ENCODE measurements at regions of chr10 and their contacts with region 1.

Region 1: GRCh38 chr10:119686439-119687191 is 35.4 kb downstream of the BAG3 start:
- DNase-seq: peak; percentile 36 to 86
- H3K4me3 ChIP-seq: peak overlapping the region; percentile 38 to 69 (median 50)
- H3K27ac ChIP-seq: peak overlapping the region; percentile 62; the same call in 1 of the 2 replicates
- H3K4me1 ChIP-seq: peaks cover 3 to 16% (median 14%) of the 10 kb centered on the region in 4 experiments; a peak in 6 of 7 replicates
- H3K27me3 ChIP-seq: no peaks in the 10 kb centered on the region
- CTCF ChIP-seq: peak; percentile 79 to 95 (median 85)
- EP300 ChIP-seq: no peak
- POLR2A ChIP-seq: no peak
- RAD21 ChIP-seq: peak; percentile 90 to 92

Region 2: GRCh38 chr10:119383174-119383856 is 303.3 kb before region 1 on chr10:
- CTCF ChIA-PET with region 1: no interaction called
- POLR2A ChIA-PET with region 1: no interaction called
- DNase-seq: no peak
- H3K4me3 ChIP-seq: no peak overlapping the region
- H3K27ac ChIP-seq: no peak overlapping the region
- H3K4me1 ChIP-seq: no peaks in the 10 kb centered on the region
- H3K27me3 ChIP-seq: no peaks in the 10 kb centered on the region
- CTCF ChIP-seq: no peak
- EP300 ChIP-seq: no peak
- POLR2A ChIP-seq: no peak
- RAD21 ChIP-seq: no peak

Region 3: DNA sequence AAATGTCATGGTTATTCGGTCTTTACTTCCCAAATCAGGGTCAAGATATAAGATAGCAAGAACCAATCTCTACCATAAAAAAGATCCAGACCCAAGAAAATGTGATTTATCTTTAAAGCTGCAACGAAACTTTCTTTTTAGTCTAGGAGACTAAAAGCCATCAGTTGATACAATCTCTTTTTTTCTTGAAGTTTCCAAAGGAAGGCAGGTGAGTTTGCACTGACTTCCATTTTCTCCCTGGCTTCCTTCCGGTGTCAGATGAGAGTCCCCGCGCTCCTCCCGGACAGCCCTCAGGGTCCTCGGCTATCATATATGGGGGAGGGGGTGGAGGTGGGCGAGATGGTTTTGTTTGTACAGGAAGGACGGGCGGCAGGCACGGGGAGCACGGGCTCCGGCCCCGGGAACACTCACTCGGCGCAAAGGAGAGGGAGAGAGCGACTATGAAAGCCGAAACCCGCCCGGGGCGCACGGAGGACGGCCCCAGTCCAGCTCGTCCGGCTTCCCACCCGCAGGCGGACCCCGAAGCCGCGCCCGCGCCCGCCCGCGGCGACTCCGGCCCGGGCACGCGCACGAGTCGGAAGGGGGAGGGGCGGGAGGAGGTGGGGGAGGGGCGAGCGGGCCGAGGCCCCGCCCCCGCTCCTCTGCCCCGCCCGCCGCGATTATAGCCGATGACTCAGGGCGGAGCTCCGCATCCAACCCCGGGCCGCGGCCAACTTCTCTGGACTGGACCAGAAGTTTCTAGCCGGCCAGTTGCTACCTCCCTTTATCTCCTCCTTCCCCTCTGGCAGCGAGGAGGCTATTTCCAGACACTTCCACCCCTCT is 35.7 kb before region 1 on chr10 and contains the start of gene BAG3:
- CTCF ChIA-PET with region 1: interaction called, 8 read pairs
- POLR2A ChIA-PET with region 1: interaction called, 13 read pairs
- DNase-seq: peak; percentile 50 to 91
- H3K4me3 ChIP-seq: peak within 1 kb of the TSS; percentile 74 to 93 (median 82)
- H3K27ac ChIP-seq: peak within 1 kb of the TSS; percentile 86
- H3K4me1 ChIP-seq: peaks cover 0 to 6% (median 2%) of the 10 kb centered on the region in 4 experiments; a peak in 2 of 7 replicates
- H3K27me3 ChIP-seq: peaks cover 0 to 2% (median 0%) of the 10 kb centered on the region in 4 experiments; a peak in 2 of 7 replicates
- CTCF ChIP-seq: no peak
- EP300 ChIP-seq: no peak; a peak in 1 of 3 replicates
- POLR2A ChIP-seq: peak; percentile 72 to 96
- RAD21 ChIP-seq: no peak
- total RNA-seq, gene BAG3: 13.3 and 14.6 TPM in 2 replicates

Region 4: DNA sequence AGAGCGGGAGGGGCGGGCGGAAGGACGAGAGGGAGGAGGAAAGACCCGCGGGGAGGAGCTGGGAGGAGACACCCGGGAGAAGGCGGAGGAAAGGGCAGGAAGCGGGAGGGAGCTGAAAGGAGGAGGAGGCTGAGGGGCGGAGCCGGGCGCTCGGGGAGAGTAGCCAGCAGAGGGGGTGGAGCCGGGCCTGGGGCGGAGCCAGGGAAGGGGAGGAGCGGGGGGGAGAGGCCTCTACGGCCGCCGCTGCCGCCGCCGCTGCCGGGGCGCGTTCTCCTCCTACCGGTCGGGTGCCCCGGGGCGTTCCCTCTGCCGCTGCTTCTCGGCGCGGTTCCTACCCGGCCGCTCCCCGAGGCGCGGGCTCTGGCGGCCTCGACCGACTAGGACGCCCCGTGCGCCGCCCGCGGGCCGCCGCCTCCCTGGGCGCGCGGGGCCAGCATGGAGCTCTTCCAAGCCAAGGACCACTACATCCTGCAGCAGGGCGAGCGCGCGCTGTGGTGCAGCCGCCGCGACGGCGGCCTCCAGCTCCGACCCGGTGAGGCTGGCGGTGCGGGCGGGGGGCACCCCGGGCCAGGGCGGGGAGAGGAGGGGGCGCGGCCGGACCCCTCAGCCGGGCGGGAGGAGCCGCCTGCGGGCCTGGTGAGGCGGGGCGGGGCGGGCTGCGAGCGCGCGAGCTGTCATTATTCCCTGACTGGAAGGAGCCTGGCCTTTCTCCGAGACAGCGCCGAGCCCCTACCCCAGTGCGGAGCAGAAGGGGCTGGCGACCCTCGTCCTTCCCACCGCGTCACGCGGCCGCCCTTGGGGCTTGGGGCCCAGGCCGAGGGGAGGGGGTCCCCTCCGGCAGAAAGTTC is 39.4 kb after region 1 on chr10 and contains the start of gene INPP5F:
- CTCF ChIA-PET with region 1: interaction called, 9 read pairs
- POLR2A ChIA-PET with region 1: interaction called, 17 read pairs
- DNase-seq: peak; percentile 92 to 99
- H3K4me3 ChIP-seq: peak within 1 kb of the TSS; percentile 67 to 99 (median 82)
- H3K27ac ChIP-seq: peak within 1 kb of the TSS; percentile 60; the same call in 1 of the 2 replicates
- H3K4me1 ChIP-seq: peaks cover 4 to 13% (median 8%) of the 10 kb centered on the region in 4 experiments; a peak in 5 of 7 replicates
- H3K27me3 ChIP-seq: no peaks in the 10 kb centered on the region
- CTCF ChIP-seq: no peak
- EP300 ChIP-seq: no peak; a peak in 1 of 3 replicates
- POLR2A ChIP-seq: peak in 1 of 2 experiments; percentile 61; a peak in 2 of 3 replicates
- RAD21 ChIP-seq: 0 out of 4 replicates have a peak, but pooled peaks of 1 of the 2 experiments have one; percentile 1
- total RNA-seq, gene INPP5F: 97.9 and 101 TPM in 2 replicates

Region 5: DNA sequence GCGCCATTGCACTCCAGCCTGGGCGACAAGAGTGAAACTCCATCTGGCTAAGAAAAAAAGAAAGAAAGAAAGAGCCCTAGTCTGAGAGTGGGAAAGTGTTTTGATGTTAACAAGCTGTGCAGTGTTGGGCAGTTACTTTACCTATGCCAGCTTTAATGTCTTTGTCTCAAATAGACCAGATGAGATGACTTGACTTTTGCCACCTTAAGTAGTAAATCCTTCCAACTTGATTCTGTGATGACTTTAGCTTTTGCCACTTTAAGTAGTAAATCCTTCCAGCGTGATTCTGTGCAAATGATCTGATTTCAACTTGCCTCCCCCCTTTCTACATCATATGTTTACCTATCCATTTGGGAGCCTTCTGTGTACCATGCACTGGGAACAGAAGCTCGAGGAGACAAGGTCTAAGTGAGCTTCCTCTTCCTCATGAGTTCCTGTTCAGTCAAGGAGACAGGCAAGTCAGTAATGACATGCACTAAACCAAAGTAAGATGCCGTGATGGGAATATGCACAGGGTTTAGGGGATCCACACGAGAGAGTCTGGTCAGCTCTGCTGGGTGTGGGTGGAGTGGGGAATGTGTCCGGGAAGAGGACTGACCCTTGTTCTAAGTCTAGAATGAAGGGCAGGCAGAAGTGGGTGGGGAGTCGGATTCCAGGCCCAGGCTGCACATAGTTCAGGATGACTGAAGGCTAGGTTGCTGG is 56.5 kb after region 1 on chr10:
- CTCF ChIA-PET with region 1: interaction called, 40 read pairs
- POLR2A ChIA-PET with region 1: interaction called, 4 read pairs
- DNase-seq: peak in 1 of 2 experiments; percentile 40
- H3K4me3 ChIP-seq: no peak overlapping the region
- H3K27ac ChIP-seq: no peak overlapping the region
- H3K4me1 ChIP-seq: peaks cover 0 to 7% (median 0%) of the 10 kb centered on the region in 4 experiments; a peak in 2 of 7 replicates
- H3K27me3 ChIP-seq: no peaks in the 10 kb centered on the region
- CTCF ChIP-seq: no peak
- EP300 ChIP-seq: no peak
- POLR2A ChIP-seq: no peak
- RAD21 ChIP-seq: no peak

Region 6: DNA sequence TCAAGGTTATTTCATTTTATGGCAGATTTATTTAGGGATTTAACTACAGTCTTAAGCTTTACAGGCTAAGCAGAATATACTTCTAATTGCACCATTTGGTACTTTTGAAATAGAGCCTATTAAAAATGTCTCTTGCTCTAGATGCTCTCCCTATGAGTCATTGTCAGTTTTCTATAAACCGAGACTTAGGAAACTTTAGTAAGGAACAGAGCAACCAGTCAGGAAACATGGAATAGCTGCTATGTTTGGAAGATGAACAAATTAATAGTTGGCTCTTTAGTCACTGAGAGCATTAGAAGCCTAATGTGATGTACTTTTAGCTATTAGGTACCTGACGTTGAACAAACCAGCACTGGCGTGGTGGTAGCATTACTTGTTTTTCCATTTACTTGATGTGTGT is 74.5 kb after region 1 on chr10:
- CTCF ChIA-PET with region 1: interaction called, 10 read pairs
- POLR2A ChIA-PET with region 1: interaction called, 4 read pairs
- DNase-seq: no peak
- H3K4me3 ChIP-seq: no peak overlapping the region
- H3K27ac ChIP-seq: no peak overlapping the region
- H3K4me1 ChIP-seq: peaks cover 0 to 2% (median 0%) of the 10 kb centered on the region in 4 experiments; a peak in 2 of 7 replicates
- H3K27me3 ChIP-seq: no peaks in the 10 kb centered on the region; a peak in 1 of 7 replicates
- CTCF ChIP-seq: no peak
- EP300 ChIP-seq: no peak
- POLR2A ChIP-seq: no peak
- RAD21 ChIP-seq: no peak

Region 7: DNA sequence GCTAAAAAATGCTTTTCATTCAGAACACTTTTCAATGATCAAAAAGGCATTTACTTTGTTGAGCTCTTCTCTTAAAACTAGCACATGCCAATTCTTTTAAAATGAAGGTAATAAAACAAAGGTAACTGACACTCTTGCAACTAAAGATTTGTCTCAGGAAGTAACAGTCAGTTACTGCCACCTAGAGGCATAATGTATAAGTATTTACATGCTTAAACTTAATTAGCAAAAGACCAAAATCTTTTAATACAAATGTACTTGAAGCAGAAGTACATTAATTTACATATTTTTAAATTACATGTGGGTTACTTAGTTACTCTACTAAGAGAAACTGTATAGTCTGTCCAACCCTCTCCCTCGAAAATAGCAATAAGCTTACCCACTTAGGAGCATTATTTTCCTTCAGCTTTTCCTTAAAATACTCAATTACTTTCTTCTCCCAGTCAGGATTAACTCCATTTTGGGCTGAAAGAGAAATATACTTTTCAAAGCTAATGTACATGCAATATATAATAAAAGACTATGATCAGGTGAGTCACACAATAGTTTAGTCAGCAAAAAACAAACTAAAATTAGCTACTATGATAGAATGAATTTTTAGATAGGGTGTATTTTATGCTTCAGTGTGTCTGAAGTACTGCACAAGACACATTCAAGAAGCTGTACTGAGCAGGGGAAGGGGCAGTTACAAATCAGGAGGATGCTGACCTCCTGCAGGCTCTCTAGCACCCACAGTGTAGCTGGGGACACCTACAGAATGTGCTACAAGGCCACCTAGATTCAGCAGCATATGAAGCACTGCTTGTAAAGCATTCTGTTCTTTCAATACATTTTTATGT is 173.0 kb after region 1 on chr10:
- CTCF ChIA-PET with region 1: interaction called, 20 read pairs
- POLR2A ChIA-PET with region 1: interaction called, 3 read pairs
- DNase-seq: no peak
- H3K4me3 ChIP-seq: no peak overlapping the region
- H3K27ac ChIP-seq: no peak overlapping the region
- H3K4me1 ChIP-seq: peaks cover 0 to 6% (median 3%) of the 10 kb centered on the region in 4 experiments; a peak in 4 of 7 replicates
- H3K27me3 ChIP-seq: no peaks in the 10 kb centered on the region
- CTCF ChIP-seq: peak in 2 of 3 experiments; percentile 18 to 43; a peak in 2 of 4 replicates
- EP300 ChIP-seq: no peak
- POLR2A ChIP-seq: no peak
- RAD21 ChIP-seq: peak in 1 of 2 experiments; percentile 55; a peak in 3 of 4 replicates